SK-N-SH (cell line): ENCODE measurements at regions of chr20 and their contacts with region 1.

Region 1: DNA sequence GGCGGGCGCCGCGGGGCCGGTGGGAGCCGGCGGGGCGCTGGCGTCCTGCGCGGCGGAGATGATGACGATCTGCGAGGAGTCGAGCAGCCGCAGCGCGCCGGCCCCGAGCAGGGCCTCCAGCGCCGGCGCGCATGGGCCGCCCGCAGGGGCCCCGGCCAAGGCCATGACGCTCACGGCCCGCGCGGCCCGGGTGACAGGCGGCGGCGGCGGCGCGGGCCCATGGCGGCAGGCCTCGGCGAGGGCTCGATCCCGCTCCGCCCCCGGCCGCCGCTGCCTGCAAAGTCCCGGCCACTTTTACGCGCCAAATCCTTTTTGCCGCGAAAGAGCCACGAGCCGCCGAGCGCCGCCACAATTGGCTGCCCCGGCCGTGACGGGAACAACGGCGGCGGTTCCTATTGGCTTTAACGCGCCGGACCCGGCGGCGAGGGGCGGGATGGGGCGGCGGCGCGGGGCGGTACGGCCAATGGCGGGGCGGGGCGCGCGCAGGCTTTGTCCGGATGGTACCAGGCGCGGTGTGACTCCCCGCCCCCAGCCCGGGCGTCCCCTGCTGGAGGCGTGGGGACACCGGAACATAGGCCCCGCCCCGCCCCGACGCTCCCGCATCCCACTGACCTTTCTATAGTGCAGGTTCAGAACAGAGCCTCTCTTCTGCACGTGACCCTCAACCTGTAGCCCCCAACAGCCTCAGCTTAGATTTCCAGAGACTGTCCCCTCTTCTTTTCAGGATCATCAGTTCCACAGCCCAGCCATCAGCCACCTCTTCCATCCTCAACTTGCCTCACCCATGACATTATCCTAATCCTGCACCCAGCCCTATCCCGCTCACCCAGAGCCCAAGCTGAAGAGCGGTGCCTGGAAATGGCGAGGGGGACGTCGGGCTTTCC is at the start of gene E2F1:
- DNase-seq: peak; percentile 99
- H3K4me3 ChIP-seq: peak within 1 kb of the TSS; percentile 61 to 62
- H3K27ac ChIP-seq: peak within 1 kb of the TSS; percentile 1 to 24; a peak in 2 of 4 replicates
- H3K4me1 ChIP-seq: peaks cover 7 to 19% of the 10 kb centered on the region in 2 experiments; a peak in 2 of 4 replicates
- H3K27me3 ChIP-seq: no peaks in the 10 kb centered on the region
- CTCF ChIP-seq: peak; percentile 34
- EP300 ChIP-seq: no peak
- RAD21 ChIP-seq: no peak
- polyA plus RNA-seq, gene E2F1: 12.4 and 15.0 TPM in 2 replicates

Region 2: GRCh38 chr20:33697129-33697528 is 10.8 kb after region 1 on chr20:
- CTCF ChIA-PET with region 1: interaction called, 15 read pairs
- POLR2A ChIA-PET with region 1: interaction called, 4 read pairs
- DNase-seq: peak; percentile 42
- H3K4me3 ChIP-seq: no peak overlapping the region
- H3K27ac ChIP-seq: peak overlapping the region; percentile 72 to 94; a peak in 3 of 4 replicates
- H3K4me1 ChIP-seq: peaks cover 4 to 24% of the 10 kb centered on the region in 2 experiments; a peak in 3 of 4 replicates
- H3K27me3 ChIP-seq: no peaks in the 10 kb centered on the region
- CTCF ChIP-seq: no peak
- EP300 ChIP-seq: no peak
- RAD21 ChIP-seq: no peak

Region 3: DNA sequence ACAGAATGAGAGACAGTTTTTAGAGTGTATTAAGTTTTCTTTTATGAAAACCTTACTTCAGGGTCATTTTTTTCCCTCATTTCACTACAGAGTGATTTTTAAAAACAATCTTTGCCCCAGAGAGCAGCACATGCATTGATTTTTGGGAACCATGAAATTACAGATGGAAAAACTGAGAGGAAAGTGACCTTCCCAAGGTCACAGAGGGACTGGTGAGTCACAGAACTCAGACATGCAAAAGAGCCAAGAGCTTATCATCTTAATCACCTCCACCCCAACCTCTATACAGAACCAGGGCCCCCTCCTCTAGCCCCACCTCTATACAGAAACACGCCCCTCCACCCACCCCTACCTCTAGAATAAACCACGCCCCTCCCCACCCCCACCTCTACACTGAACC is 23.1 kb after region 1 on chr20:
- CTCF ChIA-PET with region 1: no interaction called
- POLR2A ChIA-PET with region 1: no interaction called
- DNase-seq: no peak
- H3K4me3 ChIP-seq: no peak overlapping the region
- H3K27ac ChIP-seq: no peak overlapping the region
- H3K4me1 ChIP-seq: no peaks in the 10 kb centered on the region
- H3K27me3 ChIP-seq: no peaks in the 10 kb centered on the region
- CTCF ChIP-seq: no peak
- EP300 ChIP-seq: no peak
- RAD21 ChIP-seq: no peak